Activated B cell treated with CpG ODN at 0.5 μM for 24 hours (primary cell): ENCODE measurements at regions of chr17 and their contacts with region 1.

Region 1: DNA sequence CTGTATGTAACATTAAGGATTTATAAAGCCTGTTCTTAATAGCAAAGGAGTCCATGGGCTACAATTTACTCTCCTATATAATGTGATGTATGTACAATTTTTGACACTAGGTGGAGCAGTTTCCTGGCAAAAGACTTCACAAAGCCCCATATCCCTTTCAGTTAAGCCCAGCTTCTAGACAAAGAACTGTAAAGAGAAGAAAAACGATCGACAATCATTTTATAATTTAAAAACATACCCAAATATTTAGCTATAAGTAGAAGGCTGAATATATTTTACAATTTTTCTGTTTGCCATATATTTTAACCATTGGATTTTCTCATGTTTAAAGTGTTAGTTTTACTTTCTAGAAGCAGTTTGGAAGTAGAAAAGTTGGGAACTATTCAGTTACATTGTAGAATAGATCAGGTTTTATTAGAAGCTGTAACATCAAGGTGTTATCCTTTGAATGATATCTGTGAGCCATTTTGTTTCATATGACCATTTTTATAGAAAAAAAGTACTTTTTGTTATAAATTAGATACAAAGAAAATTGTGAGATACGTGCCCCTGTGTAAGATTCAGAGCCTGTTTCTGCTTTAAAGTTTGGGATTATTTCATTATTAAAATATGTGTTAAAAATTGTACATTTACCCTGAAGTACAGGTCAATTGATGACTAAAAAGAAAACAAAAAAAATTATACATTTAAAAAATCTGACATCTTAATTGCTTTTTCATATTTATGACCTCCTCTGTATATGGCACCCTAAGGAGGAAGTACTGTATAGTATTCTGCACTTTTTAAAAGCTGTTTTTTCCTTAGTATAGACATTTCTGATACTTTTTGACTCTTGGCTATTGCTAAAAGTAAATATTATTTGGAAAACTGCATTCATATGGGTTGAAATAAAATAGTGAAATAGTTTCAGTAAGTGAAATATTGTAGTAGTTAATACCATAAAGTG is 46.3 kb downstream of the VMP1 start:
- DNase-seq: no peak
- ATAC-seq: peak; percentile 96
- H3K4me3 Mint-ChIP-seq: no peak overlapping the region
- H3K27ac Mint-ChIP-seq: peak overlapping the region; percentile 65
- H3K4me1 Mint-ChIP-seq: peaks cover 18% of the 10 kb centered on the region
- H3K27me3 Mint-ChIP-seq: no peaks in the 10 kb centered on the region
- CTCF ChIP-seq: peak; percentile 20

Region 2: DNA sequence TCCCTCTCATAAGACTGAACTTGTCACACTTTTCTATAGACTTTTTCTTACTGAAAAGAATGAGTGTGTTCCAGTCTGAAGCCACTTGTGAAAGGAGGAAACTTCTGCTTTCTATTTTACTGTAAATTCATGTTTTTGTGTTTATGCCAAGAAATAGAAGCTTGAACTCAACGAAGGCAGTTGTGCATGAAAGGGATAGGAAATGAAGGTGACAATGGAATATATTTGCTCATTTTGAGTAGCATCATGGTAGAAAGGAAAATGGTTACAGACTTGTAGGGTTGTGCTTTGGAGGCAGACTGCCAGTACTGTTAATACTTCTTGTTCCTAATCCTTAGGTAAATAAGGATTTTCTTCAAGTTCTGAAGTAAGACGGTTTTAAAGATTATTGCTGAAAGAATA is 126.0 kb before region 1 on chr17:
- CTCF ChIA-PET with region 1: no interaction called
- POLR2A ChIA-PET with region 1: no interaction called
- intact Hi-C with region 1: no loop called
- DNase-seq: no peak
- ATAC-seq: peak; percentile 75
- H3K4me3 Mint-ChIP-seq: peak overlapping the region; percentile 38
- H3K27ac Mint-ChIP-seq: peak overlapping the region; percentile 77
- H3K4me1 Mint-ChIP-seq: peaks cover 75% of the 10 kb centered on the region
- H3K27me3 Mint-ChIP-seq: no peaks in the 10 kb centered on the region
- CTCF ChIP-seq: no peak

Region 3: GRCh38 chr17:59641799-59642489 is 111.9 kb before region 1 on chr17:
- CTCF ChIA-PET with region 1: no interaction called
- POLR2A ChIA-PET with region 1: no interaction called
- intact Hi-C with region 1: no loop called
- DNase-seq: no peak
- ATAC-seq: peak; percentile 84
- H3K4me3 Mint-ChIP-seq: peak overlapping the region; percentile 73
- H3K27ac Mint-ChIP-seq: peak overlapping the region; percentile 88
- H3K4me1 Mint-ChIP-seq: peaks cover 74% of the 10 kb centered on the region
- H3K27me3 Mint-ChIP-seq: no peaks in the 10 kb centered on the region
- CTCF ChIP-seq: no peak

Region 4: DNA sequence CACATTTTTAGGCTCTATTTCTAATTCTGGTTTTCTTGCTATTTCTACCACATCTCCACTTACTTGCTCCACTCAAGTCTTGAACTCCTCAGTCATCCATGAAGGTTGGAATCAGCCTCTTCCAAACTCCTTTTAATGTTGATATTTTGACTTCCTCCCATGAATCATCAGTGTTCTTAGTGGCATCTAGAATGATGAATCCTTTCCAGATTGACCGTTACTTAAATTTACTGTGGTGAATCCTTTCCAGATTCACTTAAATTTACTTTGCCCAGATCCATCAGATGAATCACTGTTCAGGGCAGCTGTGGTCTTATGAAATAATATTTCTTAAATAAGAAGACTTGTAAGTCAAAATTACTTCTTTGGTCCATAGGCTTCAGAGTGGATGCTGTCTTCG is 101.7 kb before region 1 on chr17:
- CTCF ChIA-PET with region 1: no interaction called
- POLR2A ChIA-PET with region 1: no interaction called
- intact Hi-C with region 1: no loop called
- DNase-seq: no peak
- ATAC-seq: no peak
- H3K4me3 Mint-ChIP-seq: no peak overlapping the region
- H3K27ac Mint-ChIP-seq: no peak overlapping the region
- H3K4me1 Mint-ChIP-seq: peaks cover 3% of the 10 kb centered on the region
- H3K27me3 Mint-ChIP-seq: no peaks in the 10 kb centered on the region
- CTCF ChIP-seq: no peak

Region 5: GRCh38 chr17:59829217-59830006 is 75.6 kb after region 1 on chr17:
- CTCF ChIA-PET with region 1: interaction called, 13 read pairs
- POLR2A ChIA-PET with region 1: interaction called, 14 read pairs
- intact Hi-C with region 1: no loop called
- DNase-seq: no peak
- ATAC-seq: peak; percentile 88
- H3K4me3 Mint-ChIP-seq: peak overlapping the region; percentile 81
- H3K27ac Mint-ChIP-seq: peak overlapping the region; percentile 88
- H3K4me1 Mint-ChIP-seq: peaks cover 80% of the 10 kb centered on the region
- H3K27me3 Mint-ChIP-seq: no peaks in the 10 kb centered on the region
- CTCF ChIP-seq: no peak

Region 6: GRCh38 chr17:59846394-59847165 is 92.8 kb after region 1 on chr17:
- CTCF ChIA-PET with region 1: interaction called, 53 read pairs
- POLR2A ChIA-PET with region 1: interaction called, 137 read pairs
- intact Hi-C with region 1: no loop called
- DNase-seq: peak; percentile 33
- ATAC-seq: peak; percentile 67
- H3K4me3 Mint-ChIP-seq: peak overlapping the region; percentile 50
- H3K27ac Mint-ChIP-seq: peak overlapping the region; percentile 92
- H3K4me1 Mint-ChIP-seq: peaks cover 75% of the 10 kb centered on the region
- H3K27me3 Mint-ChIP-seq: no peaks in the 10 kb centered on the region
- CTCF ChIP-seq: no peak

Region 7: DNA sequence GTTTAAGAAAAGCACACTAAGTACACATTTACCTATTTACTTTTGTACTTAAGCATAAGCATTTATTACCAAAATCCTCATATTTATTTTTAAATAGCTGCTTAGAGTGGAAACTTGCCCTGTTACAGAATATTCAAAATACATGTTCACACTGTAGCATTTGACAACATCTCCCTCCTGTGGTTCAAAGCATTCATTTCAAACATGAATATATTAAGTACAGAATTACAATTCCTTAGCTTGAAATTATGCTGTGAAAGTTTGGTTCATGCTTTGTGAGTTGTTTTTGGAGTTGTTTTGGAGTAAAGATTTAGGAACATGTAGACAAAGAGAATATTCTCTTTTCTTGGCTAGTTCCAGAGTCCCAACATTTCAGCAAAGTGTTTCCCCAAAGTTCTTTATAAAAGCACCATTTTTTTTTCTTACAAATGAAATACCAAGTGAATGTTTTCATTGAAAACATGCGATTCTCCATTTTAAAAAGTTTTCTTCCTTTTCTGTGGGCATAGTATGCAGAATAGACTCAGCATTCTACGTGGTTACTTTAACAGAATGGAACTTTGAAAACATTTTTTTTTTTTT is 105.7 kb after region 1 on chr17:
- CTCF ChIA-PET with region 1: interaction called, 4 read pairs
- POLR2A ChIA-PET with region 1: interaction called, 3 read pairs
- intact Hi-C with region 1: loop called (anchors 1 kb)
- DNase-seq: no peak
- ATAC-seq: peak; percentile 71
- H3K4me3 Mint-ChIP-seq: no peak overlapping the region
- H3K27ac Mint-ChIP-seq: peak overlapping the region; percentile 56
- H3K4me1 Mint-ChIP-seq: peaks cover 7% of the 10 kb centered on the region
- H3K27me3 Mint-ChIP-seq: no peaks in the 10 kb centered on the region
- CTCF ChIP-seq: peak; percentile 36

Region 8: DNA sequence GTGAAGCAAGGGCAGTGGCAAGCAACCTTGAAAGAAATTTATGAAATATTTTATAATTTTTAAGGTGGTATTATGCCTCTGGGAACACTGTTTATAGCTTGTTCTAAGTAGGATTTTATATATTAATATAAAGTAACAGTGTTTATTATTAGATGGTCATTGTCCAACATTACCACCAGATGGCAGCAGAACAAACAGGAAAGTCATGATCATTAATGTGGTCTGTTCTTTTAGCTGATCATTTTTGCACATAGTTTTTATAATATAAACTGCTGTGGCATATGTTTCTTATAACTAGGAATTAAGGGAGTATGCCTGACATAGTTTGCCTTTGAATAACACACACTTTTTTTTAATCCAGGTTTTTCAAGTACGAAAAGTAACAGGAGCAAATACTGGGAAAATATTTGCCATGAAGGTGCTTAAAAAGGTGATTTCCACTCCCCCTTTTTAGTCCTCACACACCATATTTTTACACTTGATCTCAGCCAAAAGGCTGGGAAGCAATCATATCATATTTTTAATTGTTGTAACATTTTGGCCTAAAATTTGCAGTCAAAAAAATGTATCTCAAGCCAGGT is 160.6 kb after region 1 on chr17:
- CTCF ChIA-PET with region 1: interaction called, 6 read pairs
- POLR2A ChIA-PET with region 1: interaction called, 5 read pairs
- intact Hi-C with region 1: loop called (anchors 5 kb)
- DNase-seq: no peak
- ATAC-seq: peak; percentile 57
- H3K4me3 Mint-ChIP-seq: no peak overlapping the region
- H3K27ac Mint-ChIP-seq: no peak overlapping the region
- H3K4me1 Mint-ChIP-seq: no peaks in the 10 kb centered on the region
- H3K27me3 Mint-ChIP-seq: no peaks in the 10 kb centered on the region
- CTCF ChIP-seq: peak; percentile 84